ENCODE measurements at regions of chr20 and their contacts with region 1.

Region 1: DNA sequence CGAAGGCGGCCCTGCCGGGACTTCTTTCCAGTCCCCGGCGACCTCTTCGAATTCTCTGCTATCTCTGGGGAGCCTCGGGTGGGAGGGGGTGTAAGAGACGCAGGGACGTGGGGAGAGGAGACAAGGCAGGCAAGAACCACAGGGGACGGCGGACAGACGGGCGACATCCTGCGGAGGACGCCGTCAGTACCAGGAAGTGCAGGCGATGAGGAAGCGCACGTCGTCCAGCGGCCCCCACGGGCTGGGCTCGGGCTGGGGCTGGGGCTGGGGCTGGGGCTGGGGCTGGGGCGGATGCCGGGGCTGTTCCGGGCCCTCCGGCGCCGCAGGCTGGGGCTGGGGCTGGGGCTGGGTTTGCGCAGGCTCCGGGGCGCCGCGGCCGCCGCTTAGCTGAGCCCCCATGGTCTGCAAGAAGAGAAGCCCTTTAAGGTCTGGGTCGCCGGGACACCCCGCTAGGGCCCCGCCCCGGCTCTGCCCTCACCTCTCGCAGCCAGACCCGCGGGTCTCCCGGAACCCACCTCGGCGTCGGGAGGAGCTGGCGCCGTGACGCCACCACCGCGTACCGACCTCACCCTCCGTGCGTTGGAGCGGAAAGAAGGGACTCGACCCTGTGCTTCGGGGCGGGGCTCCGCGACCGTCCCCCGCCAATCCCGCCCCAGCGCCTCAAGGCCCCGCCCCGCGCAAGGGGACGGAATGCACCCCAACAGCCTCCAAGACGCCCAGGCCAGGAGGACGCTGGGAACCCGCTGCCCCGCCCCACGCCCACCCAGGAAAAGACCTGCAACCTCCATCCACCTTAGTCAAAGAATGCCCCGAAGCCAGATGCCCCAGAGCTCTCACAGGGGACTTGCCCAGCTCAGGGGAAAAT is at the start of gene MMP24OS:
- DNase-seq: peak; percentile 86 to 95
- H3K4me3 ChIP-seq: peak within 1 kb of the TSS; percentile 84 to 95
- H3K27ac ChIP-seq: peak within 1 kb of the TSS; percentile 95 to 99
- H3K4me1 ChIP-seq: peaks cover 0 to 39% (median 24%) of the 10 kb centered on the region in 4 donors
- H3K27me3 ChIP-seq: no peaks in the 10 kb centered on the region
- CTCF ChIP-seq: peak in 1 of 2 experiments; percentile 14

Region 2: GRCh38 chr20:34825530-34826362 is 452.0 kb before region 1 on chr20 and contains the start of gene NCOA6:
- intact Hi-C with region 1: loop called (anchors 10 kb)
- DNase-seq: peak; percentile 84 to 93
- H3K4me3 ChIP-seq: peak within 1 kb of the TSS; percentile 85 to 91
- H3K27ac ChIP-seq: peak within 1 kb of the TSS; percentile 85 to 91
- H3K4me1 ChIP-seq: peaks cover 0 to 37% (median 14%) of the 10 kb centered on the region in 4 donors
- H3K27me3 ChIP-seq: no peaks in the 10 kb centered on the region
- CTCF ChIP-seq: no peak

Measured in tibial artery (tissue), 4 donors.